ENCODE measurements at regions of chr2 and their contacts with region 1.

Region 1: DNA sequence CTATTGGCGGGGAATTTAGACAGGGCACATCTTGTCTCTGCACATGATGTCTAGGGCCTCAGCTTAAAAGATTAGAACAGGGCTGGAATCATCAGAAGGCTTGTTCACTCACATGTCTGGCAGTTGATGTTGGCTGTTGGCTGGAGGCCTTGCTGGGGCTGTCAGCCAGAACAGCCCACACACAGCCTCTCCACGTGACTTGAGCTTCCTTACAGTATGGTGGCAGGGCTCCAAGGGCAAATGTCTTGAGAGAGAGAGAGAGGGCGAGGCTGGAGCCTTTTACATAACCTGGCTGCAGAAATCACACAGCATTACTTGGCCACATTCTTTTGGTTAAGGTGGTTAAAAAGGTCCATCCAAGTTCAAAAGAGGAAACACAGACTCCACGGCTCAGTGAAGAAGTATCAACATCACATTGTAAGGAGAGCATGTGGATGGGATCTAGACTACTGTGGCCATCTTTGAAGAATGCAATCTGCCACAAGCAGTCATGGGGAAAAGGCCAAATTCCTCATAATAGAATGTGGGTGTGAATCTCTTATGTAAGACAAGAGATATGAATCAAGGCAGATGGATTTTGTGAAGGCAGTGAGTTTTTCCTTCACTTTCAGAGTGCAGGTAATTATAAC is 30.4 kb downstream of the SRSF7 start:
- DNase-seq: peak; percentile 47
- H3K4me3 Mint-ChIP-seq: peak overlapping the region; percentile 25
- H3K27ac Mint-ChIP-seq: peak overlapping the region; percentile 84
- H3K4me1 Mint-ChIP-seq: peaks cover 72% of the 10 kb centered on the region
- H3K27me3 Mint-ChIP-seq: no peaks in the 10 kb centered on the region

Region 2: GRCh38 chr2:38474715-38475566 is 245.8 kb before region 1 on chr2:
- CTCF ChIA-PET with region 1: no interaction called
- POLR2A ChIA-PET with region 1: no interaction called
- intact Hi-C with region 1: no loop called
- DNase-seq: peak; percentile 73
- H3K4me3 Mint-ChIP-seq: no peak overlapping the region
- H3K27ac Mint-ChIP-seq: no peak overlapping the region
- H3K4me1 Mint-ChIP-seq: peaks cover 31% of the 10 kb centered on the region
- H3K27me3 Mint-ChIP-seq: peaks cover 14% of the 10 kb centered on the region

Region 3: DNA sequence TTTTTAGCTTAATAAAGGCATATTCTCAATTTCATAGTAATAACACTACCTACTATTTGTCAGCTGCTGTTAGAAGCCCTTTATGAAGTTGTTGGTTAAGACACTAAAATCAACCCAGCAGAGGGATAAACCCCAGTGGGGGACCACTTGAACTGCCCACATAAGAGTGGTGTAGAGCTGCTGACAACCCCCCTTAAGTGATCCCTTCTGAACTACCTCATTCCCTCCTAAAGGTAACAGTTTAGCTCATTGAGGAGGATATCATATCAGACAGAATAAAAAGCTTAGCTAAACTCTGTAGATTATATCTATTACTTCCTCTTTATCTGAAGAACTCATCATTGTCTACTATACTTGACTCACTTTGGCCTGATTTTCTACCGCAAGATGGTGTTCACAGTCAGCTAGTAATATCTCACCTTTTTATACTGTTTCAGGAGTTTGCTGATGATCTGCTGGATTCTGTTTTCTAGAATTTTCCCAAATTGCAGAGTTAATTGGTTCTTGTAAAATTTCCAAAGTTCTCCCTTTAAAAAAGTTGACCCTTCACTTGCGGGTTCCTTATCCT is 38.6 kb before region 1 on chr2:
- CTCF ChIA-PET with region 1: interaction called, 14 read pairs
- POLR2A ChIA-PET with region 1: interaction called, 7 read pairs
- intact Hi-C with region 1: loop called (anchors 1 kb)
- DNase-seq: peak; percentile 38
- H3K4me3 Mint-ChIP-seq: peak overlapping the region; percentile 63
- H3K27ac Mint-ChIP-seq: peak overlapping the region; percentile 84
- H3K4me1 Mint-ChIP-seq: peaks cover 78% of the 10 kb centered on the region
- H3K27me3 Mint-ChIP-seq: no peaks in the 10 kb centered on the region

Region 4: GRCh38 chr2:38697125-38697840 is 23.4 kb before region 1 on chr2:
- CTCF ChIA-PET with region 1: interaction called, 6 read pairs
- POLR2A ChIA-PET with region 1: interaction called, 9 read pairs
- intact Hi-C with region 1: loop called (anchors 1 kb)
- DNase-seq: peak; percentile 71
- H3K4me3 Mint-ChIP-seq: peak overlapping the region; percentile 34
- H3K27ac Mint-ChIP-seq: peak overlapping the region; percentile 94
- H3K4me1 Mint-ChIP-seq: peaks cover 86% of the 10 kb centered on the region
- H3K27me3 Mint-ChIP-seq: no peaks in the 10 kb centered on the region

Region 5: DNA sequence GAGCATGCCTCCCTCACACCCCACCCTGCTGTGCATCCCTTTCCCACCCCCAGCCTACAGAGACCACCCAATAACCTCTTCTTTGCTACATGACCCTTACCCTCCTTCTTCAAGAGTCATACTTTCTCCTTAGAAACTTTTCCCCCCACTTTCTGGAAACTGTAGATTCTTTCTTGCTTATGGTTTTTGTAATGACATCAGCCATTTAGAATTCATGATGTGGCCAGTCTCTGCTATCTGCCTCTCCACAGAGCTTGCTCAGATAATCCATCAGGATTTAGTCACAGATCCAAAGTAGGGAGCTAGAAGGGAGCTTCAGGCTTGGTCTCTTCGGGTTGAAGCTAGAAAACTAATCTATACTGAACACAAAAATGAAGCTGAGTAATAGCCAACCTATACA is 18.3 kb before region 1 on chr2:
- CTCF ChIA-PET with region 1: interaction called, 6 read pairs
- POLR2A ChIA-PET with region 1: interaction called, 9 read pairs
- intact Hi-C with region 1: loop called (anchors 1 kb)
- DNase-seq: no peak
- H3K4me3 Mint-ChIP-seq: peak overlapping the region; percentile 34
- H3K27ac Mint-ChIP-seq: peak overlapping the region; percentile 97
- H3K4me1 Mint-ChIP-seq: peaks cover 71% of the 10 kb centered on the region
- H3K27me3 Mint-ChIP-seq: no peaks in the 10 kb centered on the region

Region 6: GRCh38 chr2:38709567-38710194 is 11.0 kb before region 1 on chr2:
- CTCF ChIA-PET with region 1: interaction called, 4 read pairs
- POLR2A ChIA-PET with region 1: interaction called, 11 read pairs
- intact Hi-C with region 1: loop called (anchors 1 kb)
- DNase-seq: peak; percentile 72
- H3K4me3 Mint-ChIP-seq: peak overlapping the region; percentile 52
- H3K27ac Mint-ChIP-seq: peak overlapping the region; percentile 90
- H3K4me1 Mint-ChIP-seq: peaks cover 74% of the 10 kb centered on the region
- H3K27me3 Mint-ChIP-seq: no peaks in the 10 kb centered on the region

Region 7: DNA sequence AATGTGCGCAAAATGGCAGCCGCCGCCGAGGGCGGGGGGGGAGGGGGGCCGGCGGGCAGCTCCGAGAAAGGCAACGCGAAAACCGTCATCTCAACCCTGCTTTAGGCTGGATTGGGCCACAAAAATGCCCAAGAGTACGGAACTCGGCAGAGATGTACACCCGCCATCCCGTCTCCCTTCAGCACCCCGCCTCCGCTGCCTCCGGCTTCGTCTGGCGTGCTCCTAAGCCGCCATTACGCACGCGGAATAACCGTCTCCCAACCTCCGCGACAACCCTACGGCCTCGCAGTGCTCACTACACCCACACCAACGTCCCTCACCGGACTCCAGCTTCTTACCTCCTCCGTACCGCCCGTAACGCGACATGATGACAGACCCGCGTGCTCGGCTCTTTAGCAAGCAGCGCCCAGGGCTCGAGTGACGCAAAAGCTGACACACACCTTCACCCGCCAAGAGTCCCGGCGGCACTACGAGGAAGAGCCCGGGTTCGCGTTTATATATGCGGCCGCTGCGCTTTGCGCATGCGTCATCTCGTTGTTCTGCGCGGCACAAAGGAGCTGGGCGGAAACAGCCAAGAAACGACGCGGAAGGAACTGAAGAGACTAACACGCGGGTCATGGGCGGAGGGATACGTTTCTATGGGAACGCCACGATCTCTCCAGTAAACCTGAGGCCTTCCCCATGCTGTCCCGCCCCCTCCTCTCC is 30.3 kb after region 1 on chr2 and contains the start of gene SRSF7:
- CTCF ChIA-PET with region 1: interaction called, 4 read pairs
- POLR2A ChIA-PET with region 1: interaction called, 14 read pairs
- intact Hi-C with region 1: no loop called
- DNase-seq: peak; percentile 98
- H3K4me3 Mint-ChIP-seq: peak within 1 kb of the TSS; percentile 95
- H3K27ac Mint-ChIP-seq: peak within 1 kb of the TSS; percentile 100
- H3K4me1 Mint-ChIP-seq: peaks cover 53% of the 10 kb centered on the region
- H3K27me3 Mint-ChIP-seq: peaks cover 6% of the 10 kb centered on the region
- total RNA-seq, gene SRSF7: 276 to 279 TPM

Measured in activated CD4-positive, alpha-beta memory T cell treated with anti-CD3 and anti-CD28 coated beads for 36 hours (primary cell).